ENCODE measurements at regions of chr6 and their contacts with region 1.

Region 1: DNA sequence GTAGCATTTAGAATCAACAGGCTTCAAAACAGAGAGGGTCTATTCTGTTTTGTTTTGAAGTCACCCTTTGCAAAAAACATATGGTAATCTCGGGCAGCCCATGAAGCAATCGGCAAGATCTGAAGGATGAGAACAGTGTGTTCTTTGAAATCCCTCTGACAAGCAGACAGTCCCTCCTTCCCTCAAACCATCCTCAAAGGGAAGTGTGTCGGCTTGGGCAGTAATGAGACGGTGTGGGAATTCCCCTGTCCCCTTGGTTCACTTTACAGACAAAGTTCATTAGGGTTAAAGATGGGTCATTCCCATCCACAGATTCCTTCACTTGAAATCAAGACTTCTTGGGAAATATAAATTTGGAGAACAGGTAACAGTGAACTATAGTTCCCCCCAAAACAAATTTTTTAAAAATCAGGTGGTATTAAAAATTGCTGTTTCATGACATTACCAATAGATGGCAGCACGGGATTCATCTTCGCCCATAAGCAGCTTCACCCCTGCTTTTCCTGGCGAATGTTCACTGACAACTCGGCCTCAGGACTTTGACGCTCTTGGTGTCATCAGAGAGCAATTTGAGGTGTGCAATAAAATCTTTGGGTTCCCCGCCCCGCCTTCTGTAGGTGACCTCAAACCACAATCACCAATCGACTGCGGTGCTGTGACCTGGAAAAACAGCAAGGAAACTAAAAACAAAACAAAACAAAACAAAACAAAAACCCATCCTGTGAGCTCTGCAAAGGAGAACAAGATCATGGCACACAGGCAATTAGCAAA is 159.3 kb upstream of the TNFAIP3 start:
- DNase-seq: peak; percentile 91
- ATAC-seq: peak; percentile 80
- H3K4me3 ChIP-seq: peak overlapping the region in 3 of 5 experiments; percentile 13 to 20 (median 16)
- H3K4me3 Mint-ChIP-seq: peak overlapping the region; percentile 75
- H3K27ac ChIP-seq: peak overlapping the region; percentile 16 to 27
- H3K27ac Mint-ChIP-seq: peak overlapping the region; percentile 88
- H3K4me1 ChIP-seq: peaks cover 17 to 19% of the 10 kb centered on the region in 2 donors
- H3K4me1 Mint-ChIP-seq: peaks cover 49% of the 10 kb centered on the region
- H3K27me3 ChIP-seq: no peaks in the 10 kb centered on the region
- H3K27me3 Mint-ChIP-seq: peaks cover 5% of the 10 kb centered on the region
- CTCF ChIP-seq: peak; percentile 88

Region 2: GRCh38 chr6:137697267-137697938 is 10.4 kb before region 1 on chr6:
- CTCF ChIA-PET with region 1: interaction called, 11 read pairs
- POLR2A ChIA-PET with region 1: no interaction called
- intact Hi-C with region 1: no loop called
- DNase-seq: no peak
- ATAC-seq: no peak
- H3K4me3 ChIP-seq: no peak overlapping the region
- H3K4me3 Mint-ChIP-seq: no peak overlapping the region
- H3K27ac ChIP-seq: no peak overlapping the region
- H3K27ac Mint-ChIP-seq: no peak overlapping the region
- H3K4me1 ChIP-seq: peaks cover 12% of the 10 kb centered on the region in 2 donors
- H3K4me1 Mint-ChIP-seq: peaks cover 12% of the 10 kb centered on the region
- H3K27me3 ChIP-seq: no peaks in the 10 kb centered on the region
- H3K27me3 Mint-ChIP-seq: peaks cover 8% of the 10 kb centered on the region
- CTCF ChIP-seq: no peak

Region 3: DNA sequence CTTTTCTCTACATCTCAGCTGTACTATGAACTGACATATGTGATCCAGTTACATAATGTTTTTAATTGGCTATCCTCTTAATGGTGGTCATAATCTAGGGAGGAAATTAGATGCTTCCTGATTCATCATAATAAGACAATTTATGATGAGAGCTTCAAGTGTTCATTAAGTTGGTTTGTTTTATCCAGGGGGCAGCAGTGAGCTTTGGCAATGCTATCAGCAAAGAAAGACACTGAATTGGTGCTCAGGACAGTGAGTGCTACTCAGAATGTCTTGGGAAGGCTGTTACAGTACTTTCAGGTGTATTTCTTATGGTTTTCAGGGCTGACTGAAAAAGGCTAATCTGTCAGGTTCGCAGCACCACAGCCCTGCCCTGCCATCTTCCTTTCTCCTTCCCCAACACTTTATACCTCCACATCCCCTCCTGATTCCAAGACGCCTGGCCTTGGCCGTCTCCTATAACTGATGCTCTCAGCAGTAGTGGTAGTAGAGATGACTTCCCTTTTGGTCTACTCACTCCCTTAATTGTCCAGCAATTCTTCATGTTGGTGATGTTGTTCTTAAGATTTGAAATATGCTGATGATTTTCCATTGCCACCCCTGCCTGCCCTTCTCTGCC is 92.3 kb after region 1 on chr6:
- CTCF ChIA-PET with region 1: interaction called, 30 read pairs
- POLR2A ChIA-PET with region 1: no interaction called
- intact Hi-C with region 1: no loop called
- DNase-seq: peak; percentile 83
- ATAC-seq: peak; percentile 80
- H3K4me3 ChIP-seq: no peak overlapping the region
- H3K4me3 Mint-ChIP-seq: no peak overlapping the region
- H3K27ac ChIP-seq: no peak overlapping the region
- H3K27ac Mint-ChIP-seq: peak overlapping the region; percentile 16
- H3K4me1 ChIP-seq: peaks cover 9% of the 10 kb centered on the region in 2 donors
- H3K4me1 Mint-ChIP-seq: peaks cover 21% of the 10 kb centered on the region
- H3K27me3 ChIP-seq: no peaks in the 10 kb centered on the region
- H3K27me3 Mint-ChIP-seq: no peaks in the 10 kb centered on the region
- CTCF ChIP-seq: peak; percentile 68

Region 4: DNA sequence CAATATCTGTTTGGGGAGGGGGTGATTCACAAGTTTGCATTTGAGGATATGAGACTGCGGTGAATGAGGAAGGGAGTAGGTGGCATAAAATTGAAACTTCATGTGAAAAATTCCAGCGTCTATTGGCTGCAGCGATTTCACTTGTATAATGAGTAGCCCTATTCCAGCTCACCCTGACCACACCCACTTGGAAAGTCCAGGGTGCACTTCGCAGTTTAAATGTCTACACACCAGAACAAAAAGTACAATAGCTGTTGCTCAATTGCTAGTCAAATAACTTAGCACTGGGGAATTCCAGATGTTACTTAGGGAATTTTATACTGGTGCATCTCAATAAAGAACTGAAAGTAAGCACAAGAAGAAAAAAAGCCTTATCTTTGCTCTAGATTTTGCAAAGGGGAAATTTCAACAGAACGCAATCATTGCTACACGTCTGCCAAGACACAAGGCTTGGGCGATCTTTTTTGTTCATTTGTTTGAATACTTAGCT is 165.5 kb after region 1 on chr6:
- CTCF ChIA-PET with region 1: interaction called, 34 read pairs
- POLR2A ChIA-PET with region 1: no interaction called
- intact Hi-C with region 1: no loop called
- DNase-seq: peak; percentile 91
- ATAC-seq: peak; percentile 70
- H3K4me3 ChIP-seq: peak overlapping the region in 2 of 5 experiments; percentile 4 to 17
- H3K4me3 Mint-ChIP-seq: peak overlapping the region; percentile 94
- H3K27ac ChIP-seq: peak overlapping the region; percentile 51 to 96
- H3K27ac Mint-ChIP-seq: peak overlapping the region; percentile 80
- H3K4me1 ChIP-seq: peaks cover 58 to 64% of the 10 kb centered on the region in 2 donors
- H3K4me1 Mint-ChIP-seq: peaks cover 70% of the 10 kb centered on the region
- H3K27me3 ChIP-seq: no peaks in the 10 kb centered on the region
- H3K27me3 Mint-ChIP-seq: no peaks in the 10 kb centered on the region
- CTCF ChIP-seq: no peak

Region 5: DNA sequence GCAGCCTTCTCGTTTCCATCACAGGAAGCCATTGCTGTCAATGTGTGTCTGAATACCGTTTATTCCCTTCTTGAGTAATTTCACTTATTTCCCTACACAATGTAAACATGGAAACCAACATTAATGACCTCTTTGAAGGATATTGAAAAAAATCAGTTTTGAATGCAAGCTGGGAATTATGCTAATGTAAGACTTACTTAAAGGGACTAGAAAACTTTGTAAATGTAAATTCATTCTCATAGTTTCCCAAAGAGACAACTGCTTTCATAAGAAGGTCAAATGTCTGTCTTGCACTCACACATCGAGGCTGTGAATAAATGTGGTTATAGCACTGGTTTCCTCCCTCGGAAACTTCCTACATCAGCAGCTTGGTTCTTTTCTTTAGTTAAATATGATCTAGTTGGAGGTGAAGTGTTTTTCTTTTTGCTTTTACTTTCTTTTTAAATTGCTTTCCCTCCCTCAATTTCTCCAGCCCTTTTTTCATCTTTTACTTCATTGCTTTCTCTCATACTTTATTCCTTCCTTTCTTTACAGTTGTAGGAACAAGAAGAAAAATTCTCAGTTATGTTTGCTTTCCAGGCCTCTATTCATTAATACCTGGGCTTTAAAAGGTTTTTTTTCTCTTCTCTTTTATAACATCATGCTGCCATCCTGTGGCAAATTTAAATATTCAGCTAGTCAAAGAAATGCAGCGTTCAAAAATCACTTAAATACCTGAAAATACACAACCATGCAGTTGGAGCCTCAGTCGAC is 267.6 kb after region 1 on chr6:
- CTCF ChIA-PET with region 1: interaction called, 23 read pairs
- POLR2A ChIA-PET with region 1: no interaction called
- intact Hi-C with region 1: loop called (anchors 1 kb)
- DNase-seq: peak; percentile 57
- ATAC-seq: no peak
- H3K4me3 ChIP-seq: no peak overlapping the region
- H3K4me3 Mint-ChIP-seq: peak overlapping the region; percentile 3
- H3K27ac ChIP-seq: peak overlapping the region in 1 of 2 donors; percentile 68
- H3K27ac Mint-ChIP-seq: peak overlapping the region; percentile 12
- H3K4me1 ChIP-seq: peaks cover 8 to 17% of the 10 kb centered on the region in 2 donors
- H3K4me1 Mint-ChIP-seq: peaks cover 8% of the 10 kb centered on the region
- H3K27me3 ChIP-seq: no peaks in the 10 kb centered on the region
- H3K27me3 Mint-ChIP-seq: no peaks in the 10 kb centered on the region
- CTCF ChIP-seq: peak; percentile 56

Region 6: DNA sequence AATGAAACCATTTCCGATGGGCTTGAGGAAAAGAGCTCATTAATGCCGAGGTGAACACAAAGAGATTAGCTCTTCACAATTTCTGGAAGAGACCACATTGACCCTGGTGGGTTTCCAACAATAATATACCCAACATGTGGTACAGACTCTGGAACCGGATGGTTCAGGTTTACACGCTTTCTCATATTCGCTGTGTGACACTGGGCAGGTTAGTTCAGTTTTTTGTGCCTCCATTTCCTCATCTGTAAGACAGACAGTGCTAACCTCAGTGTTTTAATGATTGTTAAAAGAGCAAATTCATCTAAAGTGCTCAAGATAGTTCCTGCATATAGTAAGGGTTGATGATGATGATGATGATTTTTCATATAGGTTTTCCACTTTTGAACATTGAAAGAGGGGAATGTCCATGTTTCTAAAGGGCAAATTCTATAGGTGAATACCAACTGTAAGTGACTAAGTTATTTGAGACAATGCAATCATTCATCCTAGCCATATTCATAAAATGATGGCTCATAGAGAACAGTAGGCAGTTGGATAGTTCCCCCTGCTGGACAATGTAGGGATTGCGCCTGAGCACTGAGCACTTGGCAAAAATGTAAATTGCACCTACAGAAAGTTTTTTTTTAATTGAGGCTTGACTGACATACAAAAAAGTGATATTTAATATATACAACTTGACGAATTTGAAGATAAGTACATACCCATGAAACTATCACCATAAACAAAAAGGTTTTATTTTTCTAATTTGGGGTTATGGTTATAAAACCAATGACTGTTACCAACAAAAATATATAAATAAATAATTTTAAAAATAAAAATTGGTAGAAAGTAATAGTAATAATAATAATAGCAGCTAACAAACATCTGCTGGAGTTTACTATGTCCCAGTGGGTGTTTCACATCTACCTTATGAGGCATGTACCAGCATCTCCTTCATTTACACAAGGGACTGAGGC is 401.5 kb after region 1 on chr6:
- CTCF ChIA-PET with region 1: interaction called, 4 read pairs
- POLR2A ChIA-PET with region 1: no interaction called
- intact Hi-C with region 1: loop called (anchors 1 kb)
- DNase-seq: peak; percentile 81
- ATAC-seq: peak; percentile 66
- H3K4me3 ChIP-seq: no peak overlapping the region
- H3K4me3 Mint-ChIP-seq: peak overlapping the region; percentile 11
- H3K27ac ChIP-seq: no peak overlapping the region
- H3K27ac Mint-ChIP-seq: no peak overlapping the region
- H3K4me1 ChIP-seq: peaks cover 14 to 19% of the 10 kb centered on the region in 2 donors
- H3K4me1 Mint-ChIP-seq: peaks cover 18% of the 10 kb centered on the region
- H3K27me3 ChIP-seq: peaks cover 0 to 42% (median 33%) of the 10 kb centered on the region in 4 experiments
- H3K27me3 Mint-ChIP-seq: peaks cover 48% of the 10 kb centered on the region
- CTCF ChIP-seq: peak; percentile 99